Activated naive CD4-positive, alpha-beta T cell treated with anti-CD3 and anti-CD28 coated beads for 36 hours (primary cell): ENCODE measurements at regions of chr10 and their contacts with region 1.

Region 1: GRCh38 chr10:101214446-101215396 is 14.5 kb downstream of the LBX1 start:
- DNase-seq: peak; percentile 81
- H3K4me3 Mint-ChIP-seq: peak overlapping the region; percentile 55
- H3K27ac Mint-ChIP-seq: no peak overlapping the region
- H3K4me1 Mint-ChIP-seq: peaks cover 32% of the 10 kb centered on the region
- H3K27me3 Mint-ChIP-seq: peaks cover 72% of the 10 kb centered on the region

Region 2: DNA sequence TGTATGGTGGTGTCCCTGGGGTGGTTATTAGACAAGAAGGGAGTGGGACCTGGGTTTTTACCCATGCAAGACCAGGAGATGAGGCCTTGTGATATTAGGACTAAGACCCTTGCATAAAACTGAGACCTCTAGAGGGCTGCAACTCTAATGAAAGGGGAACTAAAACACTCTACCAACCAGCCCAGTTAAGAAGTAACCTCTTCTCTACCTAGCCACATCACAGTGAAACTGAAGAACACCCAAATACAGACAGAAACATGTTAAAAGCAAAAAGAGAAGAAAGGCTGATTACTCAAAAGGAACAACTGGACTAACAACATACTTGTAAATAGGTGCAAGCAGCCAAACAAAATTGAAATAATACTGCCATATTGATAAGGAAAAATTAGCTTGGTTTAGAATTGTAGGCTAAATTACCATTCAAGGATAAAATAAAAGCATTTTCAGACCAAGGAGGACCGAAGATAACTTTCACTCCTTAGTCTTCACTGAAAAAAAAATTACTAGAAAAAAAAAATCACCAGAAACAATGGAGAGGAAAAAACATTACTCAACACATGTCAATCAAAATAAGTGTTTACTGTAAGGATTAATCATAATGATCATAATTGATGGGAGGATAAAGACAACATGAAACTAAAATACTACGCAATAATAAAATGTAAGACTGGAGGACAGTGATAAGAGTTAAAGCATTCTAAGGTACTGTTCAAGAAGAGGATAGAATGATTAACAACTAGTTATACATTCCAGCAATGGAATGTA is 1056.5 kb before region 1 on chr10:
- CTCF ChIA-PET with region 1: no interaction called
- intact Hi-C with region 1: no loop called
- DNase-seq: no peak
- H3K4me3 Mint-ChIP-seq: no peak overlapping the region
- H3K27ac Mint-ChIP-seq: no peak overlapping the region
- H3K4me1 Mint-ChIP-seq: peaks cover 35% of the 10 kb centered on the region
- H3K27me3 Mint-ChIP-seq: no peaks in the 10 kb centered on the region

Region 3: DNA sequence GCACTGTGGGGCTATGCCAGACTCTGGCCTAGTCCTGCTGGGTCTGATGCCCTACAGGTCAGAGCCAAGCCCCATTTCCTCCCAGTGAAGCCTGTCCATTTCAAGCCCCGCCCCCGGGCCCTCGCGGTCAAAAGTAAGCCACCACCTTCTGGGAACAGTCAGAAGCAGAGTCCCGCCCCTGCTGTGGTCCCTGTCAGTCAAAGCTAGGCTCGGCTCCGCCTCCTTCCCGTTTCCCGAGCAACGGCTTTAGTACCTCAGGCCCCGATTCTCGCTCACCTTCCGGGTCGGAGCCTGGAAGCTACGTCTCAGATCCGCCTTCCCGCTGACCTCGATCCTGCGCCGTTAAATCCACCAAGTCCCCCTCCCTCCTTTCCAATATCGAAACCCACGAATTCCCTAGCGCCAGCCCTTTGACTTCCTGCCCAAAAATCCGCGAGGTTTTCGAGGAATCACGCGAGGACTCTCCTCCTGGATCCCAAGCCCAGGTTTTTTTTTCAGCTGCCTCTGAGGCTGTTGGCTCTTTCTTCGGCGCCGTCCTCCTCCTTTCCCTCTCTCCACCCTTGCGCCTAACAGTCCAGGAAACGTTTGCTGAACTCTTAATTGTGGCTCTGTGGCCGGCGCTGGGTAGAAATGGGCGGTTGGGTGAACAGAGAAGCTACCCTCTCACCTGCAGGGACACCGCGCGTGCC is 171.9 kb before region 1 on chr10:
- CTCF ChIA-PET with region 1: no interaction called
- intact Hi-C with region 1: loop called (anchors 5 kb)
- DNase-seq: peak; percentile 97
- H3K4me3 Mint-ChIP-seq: peak overlapping the region; percentile 91
- H3K27ac Mint-ChIP-seq: peak overlapping the region; percentile 74
- H3K4me1 Mint-ChIP-seq: peaks cover 22% of the 10 kb centered on the region
- H3K27me3 Mint-ChIP-seq: peaks cover 17% of the 10 kb centered on the region

Region 4: GRCh38 chr10:101228153-101228973 is 13.6 kb after region 1 on chr10:
- CTCF ChIA-PET with region 1: interaction called, 18 read pairs
- intact Hi-C with region 1: loop called (anchors 1 kb)
- DNase-seq: no peak
- H3K4me3 Mint-ChIP-seq: no peak overlapping the region
- H3K27ac Mint-ChIP-seq: no peak overlapping the region
- H3K4me1 Mint-ChIP-seq: peaks cover 39% of the 10 kb centered on the region
- H3K27me3 Mint-ChIP-seq: peaks cover 72% of the 10 kb centered on the region

Region 5: GRCh38 chr10:101272229-101272868 is 57.6 kb after region 1 on chr10:
- CTCF ChIA-PET with region 1: interaction called, 17 read pairs
- intact Hi-C with region 1: no loop called
- DNase-seq: peak; percentile 73
- H3K4me3 Mint-ChIP-seq: no peak overlapping the region
- H3K27ac Mint-ChIP-seq: no peak overlapping the region
- H3K4me1 Mint-ChIP-seq: peaks cover 2% of the 10 kb centered on the region
- H3K27me3 Mint-ChIP-seq: peaks cover 20% of the 10 kb centered on the region

Region 6: GRCh38 chr10:101441541-101442455 is 227.1 kb after region 1 on chr10:
- CTCF ChIA-PET with region 1: interaction called, 37 read pairs
- intact Hi-C with region 1: loop called (anchors 1 kb)
- DNase-seq: peak; percentile 48
- H3K4me3 Mint-ChIP-seq: no peak overlapping the region
- H3K27ac Mint-ChIP-seq: no peak overlapping the region
- H3K4me1 Mint-ChIP-seq: peaks cover 2% of the 10 kb centered on the region
- H3K27me3 Mint-ChIP-seq: no peaks in the 10 kb centered on the region

Region 7: DNA sequence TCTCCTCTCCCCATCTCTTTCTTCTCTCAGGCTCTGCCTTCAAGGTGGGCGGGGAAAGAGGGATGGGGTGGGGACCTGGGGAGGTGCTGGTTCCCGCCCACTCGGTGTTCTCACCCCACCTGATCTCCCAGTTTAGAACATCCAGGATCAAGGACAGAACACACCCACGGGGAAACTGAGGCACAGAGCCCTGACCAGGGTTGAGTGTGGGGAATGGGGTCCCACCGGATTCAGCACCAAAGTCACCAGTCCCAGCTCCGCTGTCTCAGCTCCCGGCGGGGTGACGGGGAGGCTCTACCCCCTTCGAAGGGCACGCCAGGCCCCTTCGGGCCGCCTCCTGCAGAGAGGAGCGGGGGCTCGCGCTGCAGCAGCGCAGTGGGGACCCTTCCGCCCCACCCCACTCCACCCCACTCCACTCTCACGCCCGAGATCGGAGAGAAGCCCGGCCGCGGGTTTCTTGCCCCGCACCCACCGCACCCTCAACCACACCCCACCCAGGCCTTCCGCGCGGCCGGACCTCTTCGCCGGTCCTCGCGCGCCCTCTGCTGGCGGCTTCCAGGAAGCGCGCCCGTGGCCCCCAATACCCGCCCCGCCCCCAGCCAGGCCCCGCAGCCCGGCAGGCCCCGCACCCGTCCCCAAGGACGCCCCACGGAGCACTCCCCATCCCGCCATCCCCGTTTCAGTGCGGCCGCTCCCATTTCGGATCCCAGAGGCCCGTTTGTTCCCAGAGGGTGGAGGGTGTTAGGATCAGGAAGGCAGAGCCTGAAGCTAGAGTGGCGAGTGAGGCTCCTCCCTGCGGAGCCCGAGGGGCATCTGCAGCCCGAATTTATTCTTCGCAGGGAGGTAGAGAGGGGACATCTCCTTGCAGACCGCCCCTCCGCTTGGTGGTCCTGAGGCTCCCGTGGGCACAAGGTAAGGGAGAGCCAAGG is 355.4 kb after region 1 on chr10:
- CTCF ChIA-PET with region 1: interaction called, 50 read pairs
- intact Hi-C with region 1: loop called (anchors 1 kb)
- DNase-seq: peak; percentile 81
- H3K4me3 Mint-ChIP-seq: peak overlapping the region; percentile 62
- H3K27ac Mint-ChIP-seq: no peak overlapping the region
- H3K4me1 Mint-ChIP-seq: peaks cover 15% of the 10 kb centered on the region
- H3K27me3 Mint-ChIP-seq: peaks cover 42% of the 10 kb centered on the region

Region 8: GRCh38 chr10:102120142-102120990 is 905.6 kb after region 1 on chr10 and contains the start of gene LDB1:
- CTCF ChIA-PET with region 1: no interaction called
- intact Hi-C with region 1: no loop called
- DNase-seq: peak; percentile 72
- H3K4me3 Mint-ChIP-seq: peak within 1 kb of the TSS; percentile 93
- H3K27ac Mint-ChIP-seq: peak within 1 kb of the TSS; percentile 98
- H3K4me1 Mint-ChIP-seq: peaks cover 38% of the 10 kb centered on the region
- H3K27me3 Mint-ChIP-seq: no peaks in the 10 kb centered on the region
- total RNA-seq, gene LDB1: 46.5 to 46.6 TPM